A673 (cell line): ENCODE measurements at regions of chr7 and their contacts with region 1.

Region 1: GRCh38 chr7:87231256-87231655 is 11.7 kb upstream of the TMEM243 start:
- DNase-seq: no peak
- H3K4me3 ChIP-seq: no peak overlapping the region
- H3K27ac ChIP-seq: no peak overlapping the region
- H3K4me1 ChIP-seq: no peaks in the 10 kb centered on the region
- H3K27me3 ChIP-seq: peaks cover 3% of the 10 kb centered on the region
- CTCF ChIP-seq: no peak

Region 2: GRCh38 chr7:86914551-86914950 is 316.7 kb before region 1 on chr7:
- CTCF ChIA-PET with region 1: no interaction called
- POLR2A ChIA-PET with region 1: no interaction called
- intact Hi-C with region 1: loop called (anchors 5 kb)
- DNase-seq: peak; percentile 42
- H3K4me3 ChIP-seq: no peak overlapping the region
- H3K27ac ChIP-seq: no peak overlapping the region
- H3K4me1 ChIP-seq: no peaks in the 10 kb centered on the region
- H3K27me3 ChIP-seq: peaks cover 18% of the 10 kb centered on the region
- CTCF ChIP-seq: peak; percentile 63

Region 3: DNA sequence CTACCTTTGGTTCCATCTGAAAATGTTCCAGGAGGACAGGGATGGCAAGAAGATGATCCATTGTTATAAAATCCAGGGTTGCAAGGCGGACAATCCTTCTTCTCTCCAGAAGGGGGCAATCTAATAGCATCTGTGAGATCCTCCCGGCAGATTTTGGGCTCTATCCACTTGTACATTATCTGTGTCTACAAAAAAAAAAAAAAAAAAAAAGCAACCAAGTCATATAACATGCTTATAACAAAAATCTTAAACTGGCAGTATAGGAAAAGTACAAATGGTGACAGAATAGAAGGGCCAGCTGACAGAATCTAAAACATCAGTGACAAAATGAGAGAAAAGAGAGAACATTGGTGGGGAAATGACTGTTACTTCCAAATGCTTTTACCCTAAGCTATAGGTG is 304.5 kb before region 1 on chr7:
- CTCF ChIA-PET with region 1: no interaction called
- POLR2A ChIA-PET with region 1: no interaction called
- intact Hi-C with region 1: loop called (anchors 2 kb)
- DNase-seq: peak; percentile 70
- H3K4me3 ChIP-seq: no peak overlapping the region
- H3K27ac ChIP-seq: no peak overlapping the region
- H3K4me1 ChIP-seq: peaks cover 4% of the 10 kb centered on the region
- H3K27me3 ChIP-seq: no peaks in the 10 kb centered on the region
- CTCF ChIP-seq: peak; percentile 78

Region 4: GRCh38 chr7:87059525-87060287 is 171.6 kb before region 1 on chr7 and contains the start of gene ELAPOR2:
- CTCF ChIA-PET with region 1: no interaction called
- POLR2A ChIA-PET with region 1: no interaction called
- intact Hi-C with region 1: loop called (anchors 10 kb)
- DNase-seq: peak; percentile 73
- H3K4me3 ChIP-seq: peak within 1 kb of the TSS; percentile 49
- H3K27ac ChIP-seq: no peak within 1 kb of the TSS
- H3K4me1 ChIP-seq: no peaks in the 10 kb centered on the region
- H3K27me3 ChIP-seq: peaks cover 8% of the 10 kb centered on the region
- CTCF ChIP-seq: peak; percentile 45
- total RNA-seq, gene ELAPOR2: not detected in 2 replicates

Region 5: DNA sequence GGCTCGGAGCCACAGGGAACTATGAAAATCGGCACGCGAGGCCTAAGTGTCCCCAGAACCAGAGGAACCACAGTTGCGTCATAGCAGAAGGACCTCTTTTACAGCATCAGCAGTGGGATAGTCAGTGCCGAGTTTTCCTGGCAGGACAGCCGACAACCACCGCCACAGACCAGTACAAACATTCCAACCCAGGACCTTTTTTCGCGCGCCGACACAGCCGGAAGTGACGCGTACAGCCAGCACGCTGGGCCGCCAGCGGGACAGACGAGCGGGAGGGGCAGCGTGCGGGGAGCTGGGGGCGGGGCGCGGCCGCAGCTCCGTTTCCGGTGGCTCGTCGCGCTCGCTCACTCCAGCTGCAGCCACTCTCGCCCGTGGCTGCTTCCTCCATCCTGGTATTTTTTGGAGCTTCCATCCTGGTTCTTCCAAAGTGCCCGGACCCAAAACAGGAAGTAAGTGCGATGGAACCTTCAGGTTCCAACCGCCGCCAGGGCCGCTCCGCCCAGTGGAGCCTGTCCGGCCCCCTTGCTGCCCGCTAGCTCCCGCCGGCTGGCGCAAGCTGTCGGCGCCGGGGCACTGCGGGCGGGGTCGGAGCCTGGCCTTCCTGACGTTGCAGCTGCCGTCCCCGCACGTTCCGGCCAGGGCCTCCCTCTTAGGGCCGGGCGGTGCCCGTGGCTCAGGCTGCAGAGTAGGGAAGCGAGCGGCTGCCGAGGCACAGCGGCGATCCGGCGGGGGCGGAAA is 79.0 kb before region 1 on chr7 and contains the start of gene DMTF1:
- CTCF ChIA-PET with region 1: no interaction called
- POLR2A ChIA-PET with region 1: no interaction called
- intact Hi-C with region 1: loop called (anchors 5 kb)
- DNase-seq: peak; percentile 96
- H3K4me3 ChIP-seq: peak within 1 kb of the TSS; percentile 89
- H3K27ac ChIP-seq: peak within 1 kb of the TSS; percentile 99
- H3K4me1 ChIP-seq: peaks cover 11% of the 10 kb centered on the region
- H3K27me3 ChIP-seq: no peaks in the 10 kb centered on the region
- CTCF ChIP-seq: no peak
- total RNA-seq, gene DMTF1: 90.5 and 94.3 TPM in 2 replicates

Region 6: GRCh38 chr7:87391020-87391701 is 159.9 kb after region 1 on chr7:
- CTCF ChIA-PET with region 1: no interaction called
- POLR2A ChIA-PET with region 1: no interaction called
- intact Hi-C with region 1: no loop called
- DNase-seq: no peak
- H3K4me3 ChIP-seq: no peak overlapping the region
- H3K27ac ChIP-seq: no peak overlapping the region
- H3K4me1 ChIP-seq: no peaks in the 10 kb centered on the region
- H3K27me3 ChIP-seq: no peaks in the 10 kb centered on the region
- CTCF ChIP-seq: no peak

Region 7: DNA sequence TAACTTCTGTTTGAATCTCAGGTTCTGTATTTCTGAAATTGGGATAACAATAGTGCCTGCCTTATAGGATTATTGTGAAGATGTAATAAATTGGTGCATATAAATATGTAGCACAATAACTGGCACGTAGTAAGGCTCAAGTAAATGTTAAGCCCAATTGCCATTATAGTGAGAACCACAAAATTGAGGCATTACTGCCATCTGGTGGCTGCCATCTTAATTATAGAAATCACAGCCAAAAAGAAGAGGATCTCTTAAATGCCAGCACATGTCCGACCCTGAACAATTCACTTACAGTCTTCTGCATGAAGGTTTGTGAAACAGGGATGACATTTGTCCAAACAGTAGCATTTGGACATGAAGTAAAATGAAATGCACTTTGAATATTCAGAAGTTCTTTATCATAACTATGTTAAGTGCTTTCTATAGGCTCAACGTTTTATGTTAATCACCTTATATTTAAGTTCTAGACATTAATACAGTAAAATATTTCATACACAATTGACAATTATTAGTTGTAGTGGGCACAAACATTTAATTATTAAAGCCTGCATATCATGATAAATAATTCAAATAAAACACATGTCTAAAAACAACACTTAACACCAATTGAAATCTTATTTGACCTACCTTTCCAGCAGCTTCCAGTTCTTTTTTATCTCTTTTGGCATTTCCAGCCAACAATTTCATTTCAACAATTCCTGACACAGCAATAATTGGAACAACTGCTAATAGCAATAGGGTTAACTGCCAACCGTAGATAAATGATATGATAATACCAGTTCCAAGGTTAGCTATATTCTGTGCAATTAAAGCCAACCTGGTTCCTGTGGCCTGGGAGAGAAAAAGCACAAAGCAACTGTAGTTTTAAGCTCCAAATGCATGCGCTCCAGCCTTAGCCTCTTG is 185.7 kb after region 1 on chr7:
- CTCF ChIA-PET with region 1: no interaction called
- POLR2A ChIA-PET with region 1: no interaction called
- intact Hi-C with region 1: loop called (anchors 5 kb)
- DNase-seq: peak; percentile 73
- H3K4me3 ChIP-seq: no peak overlapping the region
- H3K27ac ChIP-seq: no peak overlapping the region
- H3K4me1 ChIP-seq: no peaks in the 10 kb centered on the region
- H3K27me3 ChIP-seq: no peaks in the 10 kb centered on the region
- CTCF ChIP-seq: peak; percentile 71